ENCODE measurements at regions of chr6 and their contacts with region 1.

Region 1: GRCh38 chr6:26216356-26216885 is 129.2 kb downstream of the HFE start:
- DNase-seq: no peak
- H3K4me3 ChIP-seq: peak overlapping the region; percentile 87 to 98 (median 90)
- H3K27ac ChIP-seq: peak overlapping the region; percentile 97
- H3K4me1 ChIP-seq: peaks cover 0 to 8% (median 1%) of the 10 kb centered on the region in 4 experiments; a peak in 4 of 7 replicates
- H3K27me3 ChIP-seq: no peaks in the 10 kb centered on the region
- CTCF ChIP-seq: no peak
- EP300 ChIP-seq: no peak
- POLR2A ChIP-seq: peak; percentile 96 to 98
- RAD21 ChIP-seq: no peak

Region 2: DNA sequence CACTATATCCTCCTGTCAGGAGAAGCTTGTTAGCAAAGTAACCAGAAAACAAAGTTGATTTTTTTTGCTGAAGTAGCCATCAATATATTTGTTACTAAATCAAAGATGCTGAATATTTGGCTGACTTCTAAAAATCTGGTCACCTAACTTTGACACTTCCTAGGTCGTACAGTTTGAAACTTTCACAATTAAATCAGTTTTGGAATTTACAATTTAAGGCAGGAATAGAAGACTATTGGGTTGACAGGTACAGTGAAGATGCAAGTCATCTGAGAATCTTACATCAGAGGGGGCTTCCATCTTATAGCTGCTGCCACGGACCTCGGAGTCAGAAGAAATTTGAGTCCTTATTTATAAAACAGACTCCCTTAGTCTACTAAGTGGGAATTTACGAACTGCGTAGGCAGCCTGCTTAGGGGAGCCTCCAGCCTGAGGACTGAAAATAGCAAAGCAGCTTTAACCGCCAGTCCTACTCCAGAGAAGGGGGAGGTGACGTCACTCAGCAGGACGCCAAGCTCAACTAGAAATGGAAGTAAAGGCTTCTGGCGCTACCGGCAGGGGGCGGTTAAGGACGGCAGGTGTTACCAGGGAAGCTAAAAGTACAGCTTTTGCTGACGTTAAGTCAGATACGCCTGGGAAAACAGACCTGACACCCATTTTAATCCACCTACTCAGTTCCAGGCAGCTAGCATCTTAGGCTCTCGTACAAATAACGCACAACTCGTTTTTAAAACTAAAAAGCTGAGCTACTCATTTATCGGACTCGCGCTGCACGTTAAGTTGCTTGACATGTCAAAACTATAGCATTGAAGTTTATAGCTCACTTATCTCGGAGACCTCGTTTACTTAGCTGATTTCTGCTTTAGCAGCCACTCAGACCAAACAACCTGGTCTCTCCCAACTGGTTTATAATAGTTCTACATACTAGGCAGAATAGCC is 190.3 kb before region 1 on chr6:
- CTCF ChIA-PET with region 1: no interaction called
- POLR2A ChIA-PET with region 1: interaction called, 99 read pairs
- DNase-seq: peak; percentile 90 to 93
- H3K4me3 ChIP-seq: peak overlapping the region; percentile 75 to 89 (median 82)
- H3K27ac ChIP-seq: peak overlapping the region; percentile 80
- H3K4me1 ChIP-seq: peaks cover 3 to 26% (median 10%) of the 10 kb centered on the region in 4 experiments; a peak in 5 of 7 replicates
- H3K27me3 ChIP-seq: no peaks in the 10 kb centered on the region
- CTCF ChIP-seq: peak; percentile 63 to 93 (median 77)
- EP300 ChIP-seq: peak in 1 of 2 experiments; percentile 43; a peak in 1 of 3 replicates
- POLR2A ChIP-seq: peak; percentile 85 to 91; a peak in 2 of 3 replicates
- RAD21 ChIP-seq: peak; percentile 45 to 47

Region 3: GRCh38 chr6:26054857-26055669 is 161.4 kb before region 1 on chr6:
- CTCF ChIA-PET with region 1: no interaction called
- POLR2A ChIA-PET with region 1: interaction called, 11 read pairs
- DNase-seq: peak; percentile 73 to 75
- H3K4me3 ChIP-seq: peak overlapping the region; percentile 82 to 95 (median 83)
- H3K27ac ChIP-seq: peak overlapping the region; percentile 93
- H3K4me1 ChIP-seq: peaks cover 0 to 3% (median 0%) of the 10 kb centered on the region in 4 experiments; a peak in 1 of 7 replicates
- H3K27me3 ChIP-seq: no peaks in the 10 kb centered on the region
- CTCF ChIP-seq: no peak
- EP300 ChIP-seq: no peak
- POLR2A ChIP-seq: peak; percentile 95 to 97
- RAD21 ChIP-seq: peak; percentile 14 to 29; a peak in 2 of 4 replicates

Region 4: DNA sequence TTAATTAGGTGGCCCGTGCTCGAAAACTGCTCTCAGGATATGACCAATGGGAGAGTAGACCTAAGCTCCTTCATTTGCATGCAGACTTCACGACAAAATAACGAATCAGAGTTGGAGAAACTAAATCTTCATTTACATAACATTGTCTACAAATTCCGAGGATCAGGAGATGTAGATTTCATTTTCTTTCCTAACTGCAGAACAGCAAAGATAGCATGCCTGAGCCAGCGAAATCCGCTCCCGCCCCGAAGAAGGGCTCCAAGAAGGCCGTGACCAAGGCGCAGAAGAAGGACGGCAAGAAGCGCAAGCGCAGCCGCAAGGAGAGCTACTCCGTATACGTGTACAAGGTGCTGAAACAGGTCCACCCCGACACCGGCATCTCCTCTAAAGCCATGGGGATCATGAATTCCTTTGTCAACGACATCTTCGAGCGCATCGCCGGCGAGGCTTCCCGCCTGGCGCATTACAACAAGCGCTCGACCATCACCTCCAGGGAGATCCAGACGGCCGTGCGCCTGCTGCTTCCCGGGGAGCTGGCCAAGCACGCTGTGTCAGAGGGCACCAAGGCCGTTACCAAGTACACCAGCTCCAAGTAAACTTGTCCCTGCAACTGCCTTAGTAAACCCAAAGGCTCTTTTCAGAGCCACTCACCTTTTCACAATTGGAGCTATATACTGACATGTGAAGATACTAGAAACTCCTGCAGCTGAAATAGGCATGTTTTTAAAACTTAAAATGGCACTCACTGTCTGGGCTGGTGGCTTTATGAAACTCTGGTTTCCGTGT is 32.6 kb before region 1 on chr6:
- CTCF ChIA-PET with region 1: interaction called, 6 read pairs
- POLR2A ChIA-PET with region 1: interaction called, 2,731 read pairs
- DNase-seq: peak in 1 of 2 experiments; percentile 82
- H3K4me3 ChIP-seq: peak overlapping the region; percentile 45 to 73 (median 70)
- H3K27ac ChIP-seq: peak overlapping the region; percentile 97
- H3K4me1 ChIP-seq: peaks cover 0 to 17% (median 8%) of the 10 kb centered on the region in 4 experiments; a peak in 5 of 7 replicates
- H3K27me3 ChIP-seq: no peaks in the 10 kb centered on the region
- CTCF ChIP-seq: no peak
- EP300 ChIP-seq: no peak
- POLR2A ChIP-seq: peak; percentile 94 to 99
- RAD21 ChIP-seq: no peak

Region 5: GRCh38 chr6:26234421-26235296 is 18.2 kb after region 1 on chr6:
- CTCF ChIA-PET with region 1: interaction called, 3 read pairs
- POLR2A ChIA-PET with region 1: interaction called, 453 read pairs
- DNase-seq: peak in 1 of 2 experiments; percentile 85
- H3K4me3 ChIP-seq: peak overlapping the region; percentile 83 to 91 (median 88)
- H3K27ac ChIP-seq: peak overlapping the region; percentile 93
- H3K4me1 ChIP-seq: peaks cover 0 to 3% (median 0%) of the 10 kb centered on the region in 4 experiments; a peak in 3 of 7 replicates
- H3K27me3 ChIP-seq: no peaks in the 10 kb centered on the region
- CTCF ChIP-seq: no peak
- EP300 ChIP-seq: no peak
- POLR2A ChIP-seq: peak; percentile 86
- RAD21 ChIP-seq: no peak

Region 6: DNA sequence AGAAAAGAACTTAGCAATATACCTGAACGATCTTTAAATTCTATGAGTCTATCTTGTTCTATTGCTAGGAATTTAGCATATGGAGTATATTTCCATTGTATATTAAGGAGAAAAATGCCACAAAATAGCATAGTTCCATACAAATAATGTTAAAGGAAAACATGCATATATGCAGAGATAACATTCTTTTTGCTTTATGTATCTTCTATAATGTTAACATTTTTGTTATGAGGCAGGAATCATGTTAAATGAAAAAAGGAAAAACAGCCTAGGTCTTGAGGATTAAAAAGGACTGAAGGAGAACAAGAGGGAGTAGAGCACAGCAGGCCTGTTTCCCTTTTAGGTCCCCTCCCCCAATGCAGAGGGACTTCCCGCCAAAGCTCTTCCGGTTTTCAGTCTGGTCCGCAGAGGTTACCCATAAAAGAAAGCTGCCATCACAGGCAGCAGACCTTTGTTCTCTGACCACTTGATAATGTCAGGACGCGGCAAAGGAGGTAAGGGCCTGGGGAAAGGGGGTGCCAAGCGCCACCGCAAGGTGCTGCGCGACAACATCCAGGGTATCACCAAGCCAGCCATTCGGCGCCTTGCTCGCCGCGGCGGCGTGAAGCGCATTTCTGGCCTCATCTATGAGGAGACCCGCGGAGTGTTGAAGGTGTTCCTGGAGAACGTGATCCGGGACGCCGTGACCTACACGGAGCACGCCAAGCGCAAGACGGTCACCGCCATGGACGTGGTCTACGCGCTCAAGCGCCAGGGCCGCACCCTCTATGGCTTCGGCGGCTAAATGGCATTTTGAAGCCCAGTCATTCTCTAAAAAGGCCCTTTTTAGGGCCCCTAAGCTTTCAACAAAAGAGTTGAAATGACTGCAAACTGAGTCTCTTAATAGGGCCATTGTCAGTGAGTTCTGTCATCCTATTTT is 922.7 kb after region 1 on chr6:
- CTCF ChIA-PET with region 1: no interaction called
- POLR2A ChIA-PET with region 1: interaction called, 57 read pairs
- DNase-seq: peak; percentile 91 to 92
- H3K4me3 ChIP-seq: peak overlapping the region; percentile 50 to 95 (median 70)
- H3K27ac ChIP-seq: peak overlapping the region; percentile 95
- H3K4me1 ChIP-seq: peaks cover 0 to 10% (median 4%) of the 10 kb centered on the region in 4 experiments; a peak in 5 of 7 replicates
- H3K27me3 ChIP-seq: no peaks in the 10 kb centered on the region
- CTCF ChIP-seq: no peak
- EP300 ChIP-seq: peak; percentile 40 to 99
- POLR2A ChIP-seq: peak; percentile 91 to 99
- RAD21 ChIP-seq: no peak

Measured in H1 (cell line).